Left colon (tissue), 2 donors: ENCODE measurements at regions of chr5 and their contacts with region 1.

Region 1: GRCh38 chr5:167378894-167379723 is 912.3 kb upstream of the WWC1 start:
- DNase-seq: peak; percentile 29 to 36
- ATAC-seq: peak; percentile 85

Region 2: GRCh38 chr5:167167191-167167795 is 211.8 kb before region 1 on chr5:
- intact Hi-C with region 1: no loop called
- DNase-seq: no peak
- ATAC-seq: no peak

Region 3: DNA sequence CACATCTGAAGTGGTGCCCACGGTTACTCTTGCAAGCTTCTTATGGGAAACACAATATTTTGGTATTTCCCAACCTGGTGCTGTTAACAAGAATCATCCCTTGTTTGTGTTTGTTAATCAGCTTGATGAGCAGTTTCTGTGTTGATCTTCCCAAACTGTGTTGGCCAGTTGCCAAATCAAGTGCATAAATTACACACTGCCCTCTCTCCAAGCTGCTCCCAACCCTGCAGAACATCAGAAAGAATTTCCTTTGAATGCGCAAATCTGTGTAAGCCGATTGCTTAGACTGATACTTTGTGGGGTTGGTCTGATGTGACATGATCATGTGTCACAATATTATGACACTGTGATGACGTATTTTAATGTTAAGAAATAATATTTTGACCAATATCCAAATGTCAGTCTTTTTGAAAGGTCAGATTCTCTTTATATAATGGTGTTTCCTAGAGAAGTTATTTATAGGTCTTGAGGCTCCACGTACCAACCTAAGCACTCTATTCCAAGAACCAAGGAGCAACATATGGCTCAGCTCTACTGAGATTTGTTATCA is 145.9 kb after region 1 on chr5:
- intact Hi-C with region 1: no loop called
- DNase-seq: no peak
- ATAC-seq: no peak

Region 4: GRCh38 chr5:167969998-167970397 is 590.9 kb after region 1 on chr5:
- intact Hi-C with region 1: loop called in 1 of 2 experiments (anchors 10 kb)
- DNase-seq: no peak
- ATAC-seq: no peak